Left cardiac atrium (tissue), 4 donors: ENCODE measurements at regions of chr7 and their contacts with region 1.

Region 1: DNA sequence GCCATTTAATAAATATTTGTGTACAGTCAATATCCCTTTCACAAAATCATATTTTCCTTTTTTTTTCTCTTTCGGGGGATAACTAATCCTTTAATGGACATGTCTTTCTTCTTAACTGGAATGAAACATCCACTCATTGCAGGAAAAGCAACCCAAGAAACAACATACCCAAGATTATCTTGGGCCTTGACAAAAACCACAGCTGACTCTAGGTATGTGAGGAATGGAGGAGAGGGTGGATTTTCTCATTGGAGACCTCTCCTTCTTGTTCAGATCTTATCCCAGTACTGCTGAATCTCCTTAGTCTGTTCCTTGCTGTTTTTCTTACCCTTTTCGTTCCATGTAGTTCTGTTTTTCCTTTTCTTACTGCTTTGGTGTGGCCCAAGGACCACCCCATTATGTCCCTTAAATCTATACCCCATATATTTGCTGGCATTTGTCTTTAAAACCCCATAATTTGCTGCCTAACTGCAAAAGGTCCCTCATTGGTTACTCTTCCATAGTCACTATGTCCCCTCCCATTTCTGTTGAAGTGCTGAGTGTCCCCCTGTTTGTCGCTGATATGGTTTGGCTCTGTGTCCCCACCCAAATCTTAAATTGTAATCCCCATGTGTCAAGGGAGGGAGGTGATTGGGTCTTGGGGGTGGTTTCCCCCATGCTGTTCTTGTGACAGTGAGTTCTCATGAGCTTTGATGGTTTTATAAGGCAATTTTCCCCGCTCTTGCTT is 6.8 kb upstream of the CDK6 start:
- DNase-seq: no peak
- ATAC-seq: no peak

Region 2: DNA sequence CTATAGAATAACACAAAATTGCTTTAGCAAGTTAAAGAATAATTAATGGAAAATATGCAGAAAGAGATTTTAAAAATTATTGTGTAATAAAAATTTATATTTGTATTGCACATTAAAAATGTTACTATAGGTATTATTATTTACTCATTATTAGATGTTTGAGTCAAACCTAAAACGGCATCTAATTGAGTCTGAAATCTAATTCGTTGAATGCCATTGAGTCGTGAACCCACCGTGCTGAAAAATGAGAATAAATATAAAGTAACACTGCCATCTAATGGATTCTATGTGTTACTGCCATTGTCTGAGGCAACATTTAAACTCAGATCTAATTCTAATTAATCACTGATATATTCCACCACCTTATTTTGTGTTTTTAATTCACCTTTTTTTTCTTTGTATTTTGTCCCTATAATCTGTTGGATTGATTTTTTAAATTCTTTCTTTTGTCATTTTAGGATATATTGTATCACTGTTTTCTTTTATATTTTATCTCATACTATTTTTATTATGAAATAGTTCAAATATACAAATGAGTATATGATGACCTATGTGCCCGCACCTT is 212.4 kb after region 1 on chr7:
- intact Hi-C with region 1: loop called (anchors 10 kb)
- DNase-seq: no peak
- ATAC-seq: peak; percentile 33 to 57